Transverse colon (tissue), 4 donors: ENCODE measurements at regions of chr5 and their contacts with region 1.

Region 1: GRCh38 chr5:4584982-4585381 is 555.1 kb upstream of the ADAMTS16 start:
- DNase-seq: no peak
- H3K4me3 ChIP-seq: no peak overlapping the region
- H3K27ac ChIP-seq: no peak overlapping the region
- H3K4me1 ChIP-seq: no peaks in the 10 kb centered on the region
- H3K27me3 ChIP-seq: no peaks in the 10 kb centered on the region
- CTCF ChIP-seq: no peak
- EP300 ChIP-seq: no peak
- POLR2A ChIP-seq: no peak

Region 2: GRCh38 chr5:4627929-4628328 is 42.9 kb after region 1 on chr5:
- in situ Hi-C with region 1: no loop called
- intact Hi-C with region 1: loop called (anchors 1 kb)
- DNase-seq: no peak
- H3K4me3 ChIP-seq: no peak overlapping the region
- H3K27ac ChIP-seq: no peak overlapping the region
- H3K4me1 ChIP-seq: no peaks in the 10 kb centered on the region
- H3K27me3 ChIP-seq: no peaks in the 10 kb centered on the region
- CTCF ChIP-seq: no peak
- EP300 ChIP-seq: no peak
- POLR2A ChIP-seq: no peak

Region 3: GRCh38 chr5:5037674-5038073 is 452.7 kb after region 1 on chr5:
- in situ Hi-C with region 1: no loop called
- intact Hi-C with region 1: no loop called
- DNase-seq: no peak
- H3K4me3 ChIP-seq: no peak overlapping the region
- H3K27ac ChIP-seq: no peak overlapping the region
- H3K4me1 ChIP-seq: no peaks in the 10 kb centered on the region
- H3K27me3 ChIP-seq: no peaks in the 10 kb centered on the region
- CTCF ChIP-seq: no peak
- EP300 ChIP-seq: no peak
- POLR2A ChIP-seq: no peak

Region 4: DNA sequence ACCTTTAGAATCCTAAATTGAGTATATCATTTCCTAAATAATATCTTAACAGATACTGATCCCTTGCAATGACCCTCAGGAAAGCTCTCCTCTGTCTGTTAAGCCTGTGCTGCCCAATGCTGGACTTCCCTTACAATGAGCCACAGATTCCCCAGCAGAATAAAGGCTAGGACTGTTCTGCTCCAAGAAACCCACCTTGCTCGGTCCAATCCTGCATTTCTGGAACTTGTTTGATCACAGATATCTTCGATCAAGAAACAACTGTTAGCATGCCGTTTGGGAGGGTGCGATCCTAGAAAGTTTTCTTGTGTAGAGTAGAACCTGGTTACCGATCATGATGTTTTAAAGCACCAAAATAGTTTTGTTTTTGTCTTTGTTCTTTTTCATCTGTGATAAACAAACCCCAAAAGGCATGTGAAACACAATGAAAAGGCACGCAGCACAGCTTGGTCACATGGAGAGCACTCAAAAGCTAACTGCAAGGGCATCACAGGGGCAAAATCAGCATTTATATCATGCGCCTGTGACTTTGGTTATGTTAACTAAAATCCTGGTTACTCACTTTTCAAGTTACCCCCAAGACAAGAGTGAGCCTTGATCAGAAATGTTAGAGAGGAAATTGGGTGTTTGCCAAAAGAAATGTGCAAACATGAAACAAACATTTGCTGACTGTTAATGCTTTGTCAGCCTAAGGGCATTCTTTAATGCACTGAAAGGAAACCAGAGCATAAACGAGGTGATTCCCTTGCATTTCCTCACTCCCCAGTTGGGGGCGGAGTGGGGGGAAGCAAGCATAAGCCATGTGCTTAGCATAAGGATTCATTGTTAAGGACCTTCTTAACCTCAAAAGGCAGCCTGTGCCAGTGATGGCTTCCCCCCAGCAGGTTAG is 493.3 kb after region 1 on chr5:
- in situ Hi-C with region 1: no loop called
- intact Hi-C with region 1: no loop called
- DNase-seq: no peak
- H3K4me3 ChIP-seq: no peak overlapping the region
- H3K27ac ChIP-seq: no peak overlapping the region
- H3K4me1 ChIP-seq: no peaks in the 10 kb centered on the region
- H3K27me3 ChIP-seq: no peaks in the 10 kb centered on the region
- CTCF ChIP-seq: no peak
- EP300 ChIP-seq: no peak
- POLR2A ChIP-seq: no peak